ENCODE measurements at regions of chr1 and their contacts with region 1.

Region 1: GRCh38 chr1:9835758-9836450 is 12.1 kb upstream of the CLSTN1 start:
- DNase-seq: peak; percentile 85
- H3K4me3 Mint-ChIP-seq: peak overlapping the region; percentile 58
- H3K27ac Mint-ChIP-seq: peak overlapping the region; percentile 91
- H3K4me1 Mint-ChIP-seq: peaks cover 31% of the 10 kb centered on the region
- H3K27me3 Mint-ChIP-seq: no peaks in the 10 kb centered on the region
- CTCF ChIP-seq: no peak

Region 2: DNA sequence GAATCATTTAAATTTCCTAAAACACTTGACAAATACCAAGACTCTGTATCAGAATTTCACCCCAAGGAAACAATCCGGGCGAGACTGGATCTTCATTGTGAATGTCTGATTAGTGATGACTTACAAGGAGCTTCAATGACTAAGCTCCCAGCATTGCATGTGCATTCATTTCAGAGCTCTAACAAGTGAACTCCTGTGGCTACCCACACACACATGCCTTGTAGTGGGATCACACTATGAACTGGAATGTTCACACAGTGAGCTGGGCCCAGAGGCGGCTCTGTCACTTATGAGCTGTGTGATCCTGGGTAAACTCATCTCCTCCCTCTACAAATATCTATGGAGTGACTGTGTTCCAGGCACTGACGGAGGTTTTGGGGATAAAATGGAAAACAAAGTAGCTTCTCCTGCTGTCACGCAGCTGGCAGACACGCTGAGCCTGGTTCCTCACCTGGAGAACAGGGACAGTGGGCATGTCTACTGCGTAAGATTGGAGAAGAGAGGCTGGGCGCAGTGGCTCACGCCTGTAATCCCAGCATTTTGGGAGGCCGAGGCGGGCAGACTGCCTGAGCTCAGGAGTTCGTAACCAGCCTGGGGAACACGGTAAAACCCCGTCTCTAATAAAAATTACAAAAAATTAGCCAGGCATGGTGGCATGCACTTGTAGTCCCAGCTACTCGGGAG is 69.0 kb before region 1 on chr1:
- CTCF ChIA-PET with region 1: no interaction called
- POLR2A ChIA-PET with region 1: interaction called, 14 read pairs
- intact Hi-C with region 1: no loop called
- DNase-seq: peak; percentile 93
- H3K4me3 Mint-ChIP-seq: peak overlapping the region; percentile 10
- H3K27ac Mint-ChIP-seq: peak overlapping the region; percentile 74
- H3K4me1 Mint-ChIP-seq: peaks cover 6% of the 10 kb centered on the region
- H3K27me3 Mint-ChIP-seq: no peaks in the 10 kb centered on the region
- CTCF ChIP-seq: no peak

Region 3: DNA sequence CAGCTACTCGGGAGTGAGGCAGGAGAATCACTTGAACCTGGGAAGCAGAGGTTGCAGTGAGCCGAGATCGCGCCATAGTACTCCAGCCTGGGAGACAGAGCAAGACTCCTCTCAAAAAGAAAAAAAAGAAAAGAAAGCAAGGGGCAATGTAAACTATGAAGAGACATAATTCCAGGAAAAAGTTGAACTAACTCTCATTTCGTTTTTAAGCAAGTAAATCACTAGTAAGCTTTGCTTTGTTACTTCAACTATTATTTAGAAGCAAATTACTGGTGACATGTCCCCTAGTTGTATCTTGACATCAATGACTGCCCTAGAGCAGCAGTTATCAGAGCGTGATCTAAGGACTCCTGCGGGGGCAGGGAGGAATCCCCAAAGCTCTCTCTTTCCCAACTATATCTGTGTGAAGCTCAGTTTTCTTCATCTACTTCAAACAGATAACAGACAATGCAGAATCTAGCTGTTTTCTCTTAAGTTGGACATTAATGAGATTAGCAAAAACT is 30.8 kb before region 1 on chr1:
- CTCF ChIA-PET with region 1: no interaction called
- POLR2A ChIA-PET with region 1: interaction called, 13 read pairs
- intact Hi-C with region 1: no loop called
- DNase-seq: no peak
- H3K4me3 Mint-ChIP-seq: peak overlapping the region; percentile 16
- H3K27ac Mint-ChIP-seq: peak overlapping the region; percentile 89
- H3K4me1 Mint-ChIP-seq: peaks cover 23% of the 10 kb centered on the region
- H3K27me3 Mint-ChIP-seq: no peaks in the 10 kb centered on the region
- CTCF ChIP-seq: no peak

Region 4: GRCh38 chr1:9852410-9853248 is 16.7 kb after region 1 on chr1:
- CTCF ChIA-PET with region 1: interaction called, 7 read pairs
- POLR2A ChIA-PET with region 1: interaction called, 11 read pairs
- intact Hi-C with region 1: no loop called
- DNase-seq: peak; percentile 85
- H3K4me3 Mint-ChIP-seq: no peak overlapping the region
- H3K27ac Mint-ChIP-seq: peak overlapping the region; percentile 70
- H3K4me1 Mint-ChIP-seq: peaks cover 4% of the 10 kb centered on the region
- H3K27me3 Mint-ChIP-seq: no peaks in the 10 kb centered on the region
- CTCF ChIP-seq: no peak

Measured in MCF 10A (cell line).